Caco-2 (cell line): ENCODE measurements at regions of chr5 and their contacts with region 1.

Region 1: DNA sequence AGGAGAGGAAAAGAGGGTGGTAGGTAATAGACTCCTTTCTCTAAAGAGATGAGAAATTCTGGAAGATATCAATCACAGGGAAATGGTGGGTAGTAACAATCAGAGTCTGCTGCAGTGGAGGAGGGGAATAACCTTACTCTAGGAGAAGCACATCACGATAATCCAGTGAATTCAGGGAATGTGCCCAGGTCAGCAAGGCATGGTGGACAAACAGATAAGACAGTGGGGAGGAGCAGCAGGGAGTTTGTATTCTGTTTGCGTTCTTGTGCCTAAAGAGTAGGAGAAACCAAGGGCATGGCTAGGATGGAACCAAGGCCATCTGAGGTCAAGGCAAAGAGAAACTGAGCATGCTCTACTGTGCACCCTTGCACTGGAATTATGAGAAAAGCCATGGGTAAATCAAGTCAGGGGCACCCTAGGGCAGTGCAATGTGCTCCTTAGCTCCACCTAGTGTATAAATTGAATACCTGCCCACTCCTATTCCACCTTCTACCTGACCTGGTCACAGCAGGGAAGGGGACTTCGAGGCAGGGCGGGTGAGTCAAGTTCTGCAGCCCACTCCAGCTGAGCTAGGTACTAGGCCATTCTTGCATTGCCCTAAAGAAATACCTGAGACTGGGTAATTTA is 31.6 kb downstream of the RETREG1 start:
- DNase-seq: peak; percentile 83 to 91
- H3K4me3 ChIP-seq: no peak overlapping the region
- H3K4me3 Mint-ChIP-seq: peak overlapping the region; percentile 58
- H3K27ac Mint-ChIP-seq: peak overlapping the region; percentile 86
- H3K4me1 ChIP-seq: peaks cover 50% of the 10 kb centered on the region
- H3K4me1 Mint-ChIP-seq: peaks cover 52% of the 10 kb centered on the region
- H3K27me3 ChIP-seq: no peaks in the 10 kb centered on the region
- H3K27me3 Mint-ChIP-seq: no peaks in the 10 kb centered on the region
- CTCF ChIP-seq: peak; percentile 40 to 79

Region 2: GRCh38 chr5:16128944-16129343 is 456.2 kb before region 1 on chr5:
- CTCF ChIA-PET with region 1: no interaction called
- POLR2A ChIA-PET with region 1: no interaction called
- intact Hi-C with region 1: no loop called
- DNase-seq: no peak
- H3K4me3 ChIP-seq: no peak overlapping the region
- H3K4me3 Mint-ChIP-seq: no peak overlapping the region
- H3K27ac Mint-ChIP-seq: no peak overlapping the region
- H3K4me1 ChIP-seq: no peaks in the 10 kb centered on the region
- H3K4me1 Mint-ChIP-seq: no peaks in the 10 kb centered on the region
- H3K27me3 ChIP-seq: no peaks in the 10 kb centered on the region
- H3K27me3 Mint-ChIP-seq: peaks cover 2% of the 10 kb centered on the region
- CTCF ChIP-seq: no peak

Region 3: GRCh38 chr5:16489322-16489791 is 95.8 kb before region 1 on chr5:
- CTCF ChIA-PET with region 1: interaction called, 4 read pairs
- POLR2A ChIA-PET with region 1: no interaction called
- intact Hi-C with region 1: loop called (anchors 1 kb)
- DNase-seq: peak in 1 of 2 experiments; percentile 48
- H3K4me3 ChIP-seq: no peak overlapping the region
- H3K4me3 Mint-ChIP-seq: no peak overlapping the region
- H3K27ac Mint-ChIP-seq: peak overlapping the region; percentile 54
- H3K4me1 ChIP-seq: peaks cover 52% of the 10 kb centered on the region
- H3K4me1 Mint-ChIP-seq: peaks cover 31% of the 10 kb centered on the region
- H3K27me3 ChIP-seq: no peaks in the 10 kb centered on the region
- H3K27me3 Mint-ChIP-seq: no peaks in the 10 kb centered on the region
- CTCF ChIP-seq: peak; percentile 75 to 79

Region 4: GRCh38 chr5:16573401-16573800 is 11.8 kb before region 1 on chr5:
- CTCF ChIA-PET with region 1: no interaction called
- POLR2A ChIA-PET with region 1: no interaction called
- intact Hi-C with region 1: loop called (anchors 1 kb)
- DNase-seq: no peak
- H3K4me3 ChIP-seq: no peak overlapping the region
- H3K4me3 Mint-ChIP-seq: peak overlapping the region; percentile 45
- H3K27ac Mint-ChIP-seq: peak overlapping the region; percentile 6
- H3K4me1 ChIP-seq: peaks cover 3% of the 10 kb centered on the region
- H3K4me1 Mint-ChIP-seq: peaks cover 12% of the 10 kb centered on the region
- H3K27me3 ChIP-seq: no peaks in the 10 kb centered on the region
- H3K27me3 Mint-ChIP-seq: no peaks in the 10 kb centered on the region
- CTCF ChIP-seq: no peak

Region 5: GRCh38 chr5:16616536-16617273 is 31.6 kb after region 1 on chr5 and contains the start of gene RETREG1:
- CTCF ChIA-PET with region 1: interaction called, 3 read pairs
- POLR2A ChIA-PET with region 1: no interaction called
- intact Hi-C with region 1: loop called (anchors 1 kb)
- DNase-seq: peak; percentile 51 to 79
- H3K4me3 ChIP-seq: peak within 1 kb of the TSS; percentile 84
- H3K4me3 Mint-ChIP-seq: no peak within 1 kb of the TSS
- H3K27ac Mint-ChIP-seq: peak within 1 kb of the TSS; percentile 43
- H3K4me1 ChIP-seq: no peaks in the 10 kb centered on the region
- H3K4me1 Mint-ChIP-seq: no peaks in the 10 kb centered on the region
- H3K27me3 ChIP-seq: no peaks in the 10 kb centered on the region
- H3K27me3 Mint-ChIP-seq: no peaks in the 10 kb centered on the region
- CTCF ChIP-seq: no peak
- total RNA-seq, gene RETREG1: 14.1 and 15.1 TPM in 2 replicates

Region 6: DNA sequence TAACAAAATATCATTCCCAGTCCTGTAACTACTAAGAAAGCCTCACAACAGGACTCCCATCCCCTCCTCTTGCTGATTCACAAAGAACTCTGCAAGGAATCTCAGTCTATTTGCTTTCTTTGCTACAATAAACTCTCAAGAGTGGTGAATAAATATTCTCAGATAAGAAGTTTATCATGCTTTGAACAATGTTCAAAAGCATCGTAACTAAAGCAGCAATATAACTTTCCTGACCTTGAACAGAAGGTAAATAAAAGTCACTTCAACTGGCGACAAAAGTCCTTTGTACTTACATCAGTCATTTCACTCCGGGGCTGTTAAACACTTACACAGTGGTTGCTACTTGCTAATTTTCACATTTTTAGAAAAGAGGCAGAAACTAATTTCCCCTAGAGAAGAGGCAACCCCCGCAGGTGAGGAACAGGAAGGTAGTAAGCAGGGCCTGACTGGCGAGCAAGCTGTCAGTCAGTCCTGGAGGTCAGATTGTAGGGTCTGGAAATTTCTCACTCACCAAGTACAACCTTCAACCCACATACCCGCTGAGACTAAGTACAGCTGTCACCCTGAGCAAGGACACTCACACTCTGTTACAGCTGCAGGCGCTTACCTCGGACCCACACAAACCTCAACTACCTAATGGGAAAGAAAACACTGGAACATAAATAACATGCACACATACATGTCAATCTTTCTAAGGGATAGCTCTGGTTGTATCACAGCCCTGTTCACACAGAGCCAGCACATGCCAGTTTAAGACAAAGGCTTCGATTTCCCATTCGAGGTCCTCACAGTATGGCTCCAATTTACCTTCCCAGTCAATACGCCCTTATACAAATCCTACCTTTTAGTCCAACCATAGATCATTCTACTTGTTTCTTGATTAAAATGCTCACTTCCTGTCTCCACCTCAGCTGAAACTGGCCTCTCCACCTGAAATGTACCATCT is 136.3 kb after region 1 on chr5:
- CTCF ChIA-PET with region 1: no interaction called
- POLR2A ChIA-PET with region 1: no interaction called
- intact Hi-C with region 1: loop called (anchors 5 kb)
- DNase-seq: peak; percentile 69 to 73
- H3K4me3 ChIP-seq: no peak overlapping the region
- H3K4me3 Mint-ChIP-seq: peak overlapping the region; percentile 37
- H3K27ac Mint-ChIP-seq: peak overlapping the region; percentile 92
- H3K4me1 ChIP-seq: peaks cover 36% of the 10 kb centered on the region
- H3K4me1 Mint-ChIP-seq: peaks cover 20% of the 10 kb centered on the region
- H3K27me3 ChIP-seq: no peaks in the 10 kb centered on the region; the same call in 1 of the 2 replicates
- H3K27me3 Mint-ChIP-seq: no peaks in the 10 kb centered on the region
- CTCF ChIP-seq: no peak

Region 7: GRCh38 chr5:16736158-16736995 is 151.2 kb after region 1 on chr5:
- CTCF ChIA-PET with region 1: no interaction called
- POLR2A ChIA-PET with region 1: no interaction called
- intact Hi-C with region 1: loop called (anchors 5 kb)
- DNase-seq: peak; percentile 72 to 81
- H3K4me3 ChIP-seq: no peak overlapping the region
- H3K4me3 Mint-ChIP-seq: peak overlapping the region; percentile 12
- H3K27ac Mint-ChIP-seq: peak overlapping the region; percentile 91
- H3K4me1 ChIP-seq: peaks cover 20% of the 10 kb centered on the region
- H3K4me1 Mint-ChIP-seq: peaks cover 31% of the 10 kb centered on the region
- H3K27me3 ChIP-seq: no peaks in the 10 kb centered on the region
- H3K27me3 Mint-ChIP-seq: no peaks in the 10 kb centered on the region
- CTCF ChIP-seq: no peak